ENCODE measurements at regions of chr1 and their contacts with region 1.

Region 1: GRCh38 chr1:160437432-160438316 is 37.3 kb downstream of the VANGL2 start:
- DNase-seq: peak; percentile 28
- CTCF ChIP-seq: no peak

Region 2: GRCh38 chr1:160416369-160416768 is 21.3 kb before region 1 on chr1:
- CTCF ChIA-PET with region 1: no interaction called
- POLR2A ChIA-PET with region 1: no interaction called
- DNase-seq: no peak
- CTCF ChIP-seq: peak; percentile 40

Region 3: GRCh38 chr1:160451119-160451858 is 13.6 kb after region 1 on chr1:
- CTCF ChIA-PET with region 1: interaction called, 10 read pairs
- POLR2A ChIA-PET with region 1: no interaction called
- DNase-seq: no peak
- CTCF ChIP-seq: no peak

Region 4: DNA sequence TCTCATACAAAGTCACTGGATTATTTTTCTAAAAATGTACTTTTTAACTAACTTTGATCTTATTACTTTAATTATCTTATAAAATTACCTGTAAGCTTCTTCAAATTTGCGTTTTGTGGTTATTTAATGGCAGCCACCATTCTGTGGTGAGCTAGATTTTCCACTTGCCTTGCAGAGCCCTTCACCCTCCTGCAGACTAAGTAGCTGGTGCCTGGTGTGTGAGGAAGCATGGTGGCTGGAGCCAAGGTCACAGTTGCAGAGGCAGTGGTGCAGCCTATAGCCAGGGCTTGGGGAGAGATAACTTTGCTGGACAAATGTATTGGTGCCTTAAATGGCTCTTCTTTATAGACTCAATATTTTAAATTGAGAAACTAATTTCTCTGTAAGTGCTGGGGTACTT is 152.8 kb after region 1 on chr1:
- CTCF ChIA-PET with region 1: no interaction called
- POLR2A ChIA-PET with region 1: no interaction called
- DNase-seq: no peak
- CTCF ChIP-seq: no peak

Region 5: DNA sequence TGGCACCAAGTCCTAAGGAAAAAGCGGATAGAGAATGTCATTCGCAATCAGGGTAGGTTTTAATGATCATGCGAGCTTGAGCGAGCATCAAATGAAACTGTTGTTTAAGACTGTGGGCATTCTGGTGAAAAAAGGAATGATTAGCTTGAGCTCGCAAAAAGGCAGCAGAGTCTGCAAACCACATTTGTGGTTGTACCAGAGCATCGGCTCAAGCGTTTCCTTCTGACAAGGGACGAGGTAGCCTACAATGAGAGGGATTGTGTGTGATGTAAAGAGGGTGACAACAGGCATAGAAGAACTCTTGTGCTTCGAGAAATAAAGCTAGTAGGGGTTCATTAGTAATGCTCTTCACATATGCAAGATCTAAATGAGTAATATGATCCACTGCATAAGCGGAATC is 285.1 kb after region 1 on chr1:
- CTCF ChIA-PET with region 1: no interaction called
- POLR2A ChIA-PET with region 1: no interaction called
- DNase-seq: no peak
- CTCF ChIP-seq: no peak